AG04449 (cell line): ENCODE measurements at regions of chr9 and their contacts with region 1.

Region 1: GRCh38 chr9:120936011-120936763 is 9.6 kb upstream of the TRAF1 start:
- DNase-seq: peak; percentile 60
- H3K4me3 ChIP-seq: peak overlapping the region; percentile 53
- CTCF ChIP-seq: peak; percentile 94

Region 2: DNA sequence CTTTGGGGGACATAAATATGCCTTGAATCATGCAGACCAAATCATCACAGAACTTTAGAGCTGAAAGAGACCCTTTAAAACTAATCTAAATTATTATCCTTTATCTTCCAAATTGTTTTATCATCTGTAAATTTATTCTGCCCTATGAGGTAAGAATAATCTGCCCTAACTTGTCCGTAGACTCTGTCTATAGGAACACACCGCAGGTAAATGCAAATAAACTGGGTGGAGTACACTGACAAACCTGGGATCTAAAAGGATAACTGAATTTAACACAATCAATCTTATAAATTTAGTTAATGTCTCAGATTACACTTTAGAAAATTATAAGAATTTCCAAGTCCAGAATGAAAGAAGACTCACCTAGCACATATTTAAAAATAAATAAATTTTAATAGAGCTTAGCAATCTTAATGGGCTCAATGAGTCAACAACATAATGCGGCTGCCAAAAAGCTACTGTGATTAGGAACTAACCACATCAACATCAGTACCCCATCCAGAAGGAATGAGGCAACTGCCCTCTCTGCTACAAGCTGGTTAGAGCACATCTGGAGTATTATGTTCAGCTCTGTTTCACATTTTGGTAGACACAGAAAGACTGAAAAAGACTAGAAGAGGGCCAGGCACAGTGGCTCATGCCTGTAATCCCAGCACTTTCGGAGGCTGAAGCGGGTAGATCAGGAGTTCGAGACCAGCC is 227.5 kb before region 1 on chr9:
- CTCF ChIA-PET with region 1: no interaction called
- POLR2A ChIA-PET with region 1: no interaction called
- DNase-seq: no peak
- H3K4me3 ChIP-seq: no peak overlapping the region
- CTCF ChIP-seq: no peak

Region 3: GRCh38 chr9:120755827-120756434 is 180.3 kb before region 1 on chr9:
- CTCF ChIA-PET with region 1: interaction called, 32 read pairs
- POLR2A ChIA-PET with region 1: no interaction called
- DNase-seq: no peak
- H3K4me3 ChIP-seq: no peak overlapping the region
- CTCF ChIP-seq: peak; percentile 68

Region 4: GRCh38 chr9:120868676-120869359 is 67.4 kb before region 1 on chr9:
- CTCF ChIA-PET with region 1: interaction called, 14 read pairs
- POLR2A ChIA-PET with region 1: no interaction called
- DNase-seq: peak; percentile 23
- H3K4me3 ChIP-seq: peak overlapping the region; percentile 65
- CTCF ChIP-seq: peak; percentile 75

Region 5: DNA sequence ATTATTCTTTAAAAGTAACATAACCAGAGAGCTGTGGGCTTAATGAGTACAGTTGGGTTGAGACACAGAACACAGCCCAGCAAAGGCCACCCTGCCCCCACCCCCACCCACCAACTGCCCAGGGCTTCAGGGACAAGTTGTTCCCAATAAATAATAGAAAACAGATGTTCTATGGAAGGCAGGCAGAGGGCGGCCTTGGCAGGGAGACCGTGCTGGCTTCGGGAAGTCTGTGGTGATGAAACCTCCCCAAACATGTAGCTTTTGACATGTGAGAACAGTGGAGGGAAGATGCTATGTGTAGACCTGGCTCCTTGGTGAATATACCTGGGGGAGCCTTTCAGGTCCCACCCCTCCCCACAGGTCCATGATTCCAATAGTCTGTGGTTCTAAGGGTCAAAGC is 19.6 kb before region 1 on chr9:
- CTCF ChIA-PET with region 1: interaction called, 12 read pairs
- POLR2A ChIA-PET with region 1: no interaction called
- DNase-seq: no peak
- H3K4me3 ChIP-seq: no peak overlapping the region
- CTCF ChIP-seq: no peak

Region 6: DNA sequence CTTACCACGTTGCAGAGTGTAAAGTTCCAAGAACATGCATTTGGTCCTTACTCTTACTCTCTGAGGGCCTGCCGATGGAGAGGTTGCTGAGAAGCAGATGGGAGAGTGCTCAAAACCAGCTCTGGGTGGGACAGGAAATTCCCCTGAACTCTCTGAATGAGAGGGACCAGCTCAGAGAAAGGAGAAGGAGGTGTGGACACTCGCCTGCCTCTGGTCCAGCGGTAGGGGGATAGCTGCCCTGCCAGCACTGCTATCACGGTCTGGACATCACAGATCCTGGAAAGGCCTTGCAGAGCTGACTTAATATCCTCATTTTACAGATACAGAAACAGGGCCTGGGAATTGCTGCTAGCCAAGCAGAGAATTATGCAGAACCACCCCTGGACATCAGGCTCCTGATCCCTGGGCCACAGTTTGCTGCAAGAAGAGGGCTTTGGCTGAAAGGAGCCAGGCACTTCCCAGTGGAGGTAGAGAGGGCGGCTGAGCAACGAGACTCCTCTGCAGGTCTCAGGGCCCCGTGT is 14.5 kb before region 1 on chr9:
- CTCF ChIA-PET with region 1: interaction called, 12 read pairs
- POLR2A ChIA-PET with region 1: no interaction called
- DNase-seq: no peak
- H3K4me3 ChIP-seq: no peak overlapping the region
- CTCF ChIP-seq: no peak

Region 7: DNA sequence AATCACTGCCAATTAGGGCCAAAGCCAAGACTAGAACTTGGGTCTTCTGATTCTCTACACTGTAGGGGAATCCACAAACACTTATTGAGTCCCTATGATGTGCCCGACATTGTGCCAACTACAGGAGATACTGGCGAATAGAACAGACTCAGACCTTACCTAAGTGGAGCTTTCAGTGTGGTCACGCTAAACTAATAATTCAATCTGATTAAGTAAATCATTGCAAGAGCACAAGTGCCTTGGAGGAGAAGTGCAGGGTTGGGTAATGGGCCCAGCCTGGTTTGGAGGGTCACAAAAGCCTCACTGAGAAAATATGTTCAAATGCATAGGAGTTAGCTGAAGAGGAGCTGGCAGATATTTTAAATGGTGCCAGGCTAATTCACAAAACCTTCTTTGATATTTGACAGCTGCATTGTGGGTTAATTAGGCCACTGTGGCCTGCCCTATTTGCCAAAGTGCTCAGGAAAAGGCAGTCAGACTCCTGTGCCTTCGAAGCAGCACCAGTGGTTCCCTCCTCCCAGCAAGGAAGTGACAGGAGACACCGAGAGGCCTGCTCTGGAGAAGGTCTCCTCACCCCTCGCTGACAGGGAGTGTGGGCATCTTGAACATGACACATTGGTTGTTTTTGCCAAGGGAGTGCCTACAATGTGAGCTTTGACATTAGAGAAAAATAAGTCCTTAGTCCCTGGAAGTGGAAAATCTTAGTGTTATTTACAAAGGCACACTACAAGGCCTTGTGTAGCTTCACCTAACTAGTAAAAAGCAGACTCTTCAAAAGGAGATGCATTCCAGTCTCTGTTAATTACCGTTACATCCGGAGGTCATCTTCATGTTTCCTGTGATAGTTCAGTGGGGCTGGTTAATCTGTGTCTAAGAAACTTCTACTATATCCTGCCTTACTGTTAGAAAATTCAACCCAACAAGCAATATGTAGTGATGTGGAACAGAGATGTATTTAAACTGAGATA is 14.5 kb after region 1 on chr9:
- CTCF ChIA-PET with region 1: interaction called, 12 read pairs
- POLR2A ChIA-PET with region 1: no interaction called
- DNase-seq: no peak
- H3K4me3 ChIP-seq: no peak overlapping the region
- CTCF ChIP-seq: no peak